ENCODE measurements at regions of chr17 and their contacts with region 1.

Region 1: DNA sequence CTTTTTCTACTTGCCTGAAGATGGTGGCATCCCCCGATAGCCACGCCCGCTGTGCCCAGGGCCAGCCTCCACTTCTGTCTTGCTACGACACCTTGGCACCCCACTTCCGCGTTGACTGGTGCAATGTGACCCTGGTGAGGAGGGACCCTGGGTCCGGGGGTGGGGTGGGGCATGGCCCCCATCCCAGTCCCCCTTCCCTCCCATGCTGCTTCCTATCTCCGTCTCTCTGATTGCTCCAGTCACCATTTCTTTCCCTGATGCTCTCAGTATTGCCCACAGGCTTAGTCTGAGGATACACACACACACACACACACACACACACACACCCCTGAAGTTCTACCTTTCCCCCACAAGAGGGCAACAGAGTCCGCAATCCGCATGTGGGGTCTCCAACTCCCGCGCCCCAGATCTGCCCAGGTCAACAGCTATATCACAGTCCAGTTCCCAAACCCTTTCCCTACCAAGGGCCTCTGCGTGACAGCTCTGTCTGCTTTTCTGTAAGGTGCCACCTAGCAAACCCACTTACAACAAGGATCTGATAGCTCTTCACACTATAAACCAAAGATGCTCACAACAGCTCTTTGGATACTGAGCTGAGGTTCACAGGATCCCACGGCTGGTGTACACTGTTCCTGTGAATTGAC is 3.4 kb downstream of the SGCA start:
- DNase-seq: peak; percentile 32 to 84 (median 56)
- ATAC-seq: peak; percentile 88
- H3K4me3 ChIP-seq: peak overlapping the region; percentile 26
- H3K4me3 Mint-ChIP-seq: peak overlapping the region; percentile 63
- H3K27ac ChIP-seq: no peak overlapping the region
- H3K27ac Mint-ChIP-seq: peak overlapping the region; percentile 58
- H3K4me1 ChIP-seq: peaks cover 18% of the 10 kb centered on the region
- H3K4me1 Mint-ChIP-seq: peaks cover 12% of the 10 kb centered on the region
- H3K27me3 ChIP-seq: no peaks in the 10 kb centered on the region
- H3K27me3 Mint-ChIP-seq: no peaks in the 10 kb centered on the region
- CTCF ChIP-seq: peak; percentile 30

Region 2: GRCh38 chr17:49997791-49998703 is 171.2 kb before region 1 on chr17:
- CTCF ChIA-PET with region 1: no interaction called
- POLR2A ChIA-PET with region 1: no interaction called
- intact Hi-C with region 1: no loop called
- DNase-seq: peak; percentile 68 to 94 (median 78)
- ATAC-seq: peak; percentile 83
- H3K4me3 ChIP-seq: no peak overlapping the region
- H3K4me3 Mint-ChIP-seq: no peak overlapping the region
- H3K27ac ChIP-seq: no peak overlapping the region
- H3K27ac Mint-ChIP-seq: no peak overlapping the region
- H3K4me1 ChIP-seq: peaks cover 44% of the 10 kb centered on the region
- H3K4me1 Mint-ChIP-seq: peaks cover 39% of the 10 kb centered on the region
- H3K27me3 ChIP-seq: peaks cover 71 to 82% of the 10 kb centered on the region in 2 experiments
- H3K27me3 Mint-ChIP-seq: peaks cover 84% of the 10 kb centered on the region
- CTCF ChIP-seq: peak; percentile 94

Region 3: DNA sequence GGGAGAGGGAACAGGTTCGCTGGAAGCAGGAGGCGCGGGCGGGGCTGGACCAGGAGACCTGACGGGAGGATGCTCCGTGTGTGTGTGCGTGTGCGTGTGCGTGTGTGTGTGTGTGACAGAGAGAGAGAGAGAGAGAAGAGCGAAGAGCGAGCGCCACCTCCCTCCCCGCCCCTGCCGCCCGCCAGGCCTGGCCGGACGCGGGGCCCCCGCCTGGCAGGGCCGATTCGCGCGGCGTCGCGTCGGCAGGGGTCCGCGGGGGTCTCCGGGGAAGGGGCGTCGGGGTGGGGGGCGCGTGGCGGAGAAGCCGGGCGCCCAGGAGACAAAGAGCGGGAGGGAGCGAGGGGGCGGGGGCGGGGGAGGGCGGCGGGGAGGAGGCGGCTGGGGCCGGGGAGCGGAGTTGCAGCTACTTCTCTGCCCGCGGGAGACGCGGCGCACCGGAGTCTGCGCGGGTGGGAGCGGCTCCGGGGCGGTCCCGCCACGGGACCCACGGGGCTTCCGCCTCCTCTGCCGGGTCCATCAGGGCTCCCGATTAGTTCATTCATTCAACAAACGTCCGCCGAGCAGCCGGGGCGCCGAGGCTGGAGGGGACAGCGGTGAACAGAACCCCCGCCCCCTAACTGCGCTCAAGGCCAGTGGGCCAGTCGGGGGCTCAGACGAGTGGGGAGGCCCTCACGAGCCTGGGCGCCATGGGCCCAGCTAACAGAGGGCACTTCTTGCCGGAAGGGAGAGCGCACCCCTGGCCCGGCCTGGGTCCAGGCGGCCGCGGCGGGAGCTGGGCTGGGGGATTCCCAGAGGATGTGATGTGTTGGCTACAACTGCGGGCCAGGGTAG is 39.3 kb before region 1 on chr17 and contains the start of gene SAMD14:
- CTCF ChIA-PET with region 1: no interaction called
- POLR2A ChIA-PET with region 1: no interaction called
- intact Hi-C with region 1: loop called in 1 of 2 experiments (anchors 5 kb)
- DNase-seq: peak in 11 of 14 experiments; percentile 42 to 83 (median 55)
- ATAC-seq: peak; percentile 75
- H3K4me3 ChIP-seq: peak within 1 kb of the TSS; percentile 57
- H3K4me3 Mint-ChIP-seq: peak within 1 kb of the TSS; percentile 89
- H3K27ac ChIP-seq: no peak within 1 kb of the TSS
- H3K27ac Mint-ChIP-seq: peak within 1 kb of the TSS; percentile 81
- H3K4me1 ChIP-seq: peaks cover 35% of the 10 kb centered on the region
- H3K4me1 Mint-ChIP-seq: peaks cover 33% of the 10 kb centered on the region
- H3K27me3 ChIP-seq: peaks cover 10 to 13% of the 10 kb centered on the region in 2 experiments
- H3K27me3 Mint-ChIP-seq: peaks cover 27% of the 10 kb centered on the region
- CTCF ChIP-seq: no peak
- total RNA-seq, gene SAMD14: 0.33 to 0.53 TPM